ENCODE measurements at regions of chr10 and their contacts with region 1.

Region 1: GRCh38 chr10:88851706-88852105 is at the start of gene ANKRD22:
- DNase-seq: peak; percentile 95
- H3K4me3 Mint-ChIP-seq: peak within 1 kb of the TSS; percentile 49
- H3K27ac Mint-ChIP-seq: peak within 1 kb of the TSS; percentile 88
- H3K4me1 Mint-ChIP-seq: peaks cover 32% of the 10 kb centered on the region
- H3K27me3 Mint-ChIP-seq: no peaks in the 10 kb centered on the region
- CTCF ChIP-seq: no peak
- total RNA-seq, gene ANKRD22: 0.26 TPM in 1 of 2 replicates, not detected in the other

Region 2: DNA sequence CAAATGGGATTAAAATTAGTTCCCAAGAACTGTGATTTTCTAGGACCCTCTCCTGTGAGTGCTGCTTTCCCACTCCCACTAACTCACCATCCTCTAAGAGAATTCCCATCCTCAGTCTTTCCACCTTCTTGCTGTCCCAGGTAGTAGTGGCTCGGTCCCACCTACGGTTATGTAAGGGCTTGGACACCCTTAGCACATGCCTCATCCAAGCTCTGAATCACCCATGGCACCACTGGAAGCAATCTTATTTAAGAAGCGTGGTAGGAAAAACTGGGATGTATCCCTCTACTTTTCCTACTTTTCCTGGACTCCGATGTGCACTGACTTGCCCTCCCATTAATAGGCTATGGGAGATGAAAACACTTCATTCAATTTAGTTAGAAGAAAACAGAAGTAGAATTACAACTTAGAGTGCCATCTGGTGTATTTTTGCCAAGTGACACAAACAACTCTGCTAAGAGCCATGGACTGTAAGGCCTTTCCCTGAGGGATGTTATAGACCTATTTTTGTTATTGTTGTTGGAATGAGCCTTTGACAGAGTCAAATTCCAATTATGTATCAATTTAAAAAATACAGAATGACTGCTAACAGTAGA is 13.7 kb after region 1 on chr10:
- CTCF ChIA-PET with region 1: interaction called, 11 read pairs
- POLR2A ChIA-PET with region 1: interaction called, 6 read pairs
- intact Hi-C with region 1: no loop called
- DNase-seq: peak; percentile 53
- H3K4me3 Mint-ChIP-seq: no peak overlapping the region
- H3K27ac Mint-ChIP-seq: no peak overlapping the region
- H3K4me1 Mint-ChIP-seq: peaks cover 4% of the 10 kb centered on the region
- H3K27me3 Mint-ChIP-seq: no peaks in the 10 kb centered on the region
- CTCF ChIP-seq: peak; percentile 25